Activated naive CD4-positive, alpha-beta T cell treated with anti-CD3 and anti-CD28 coated beads, Interleukin-2, amount 10 ng/mL, durations not matched to agents 7 days and 5 days (primary cell): ENCODE measurements at regions of chr1 and their contacts with region 1.

Region 1: GRCh38 chr1:17606826-17607440 is 67.4 kb downstream of the ARHGEF10L start:
- DNase-seq: peak; percentile 69
- H3K4me3 Mint-ChIP-seq: no peak overlapping the region
- H3K27ac Mint-ChIP-seq: no peak overlapping the region
- H3K4me1 Mint-ChIP-seq: no peaks in the 10 kb centered on the region
- H3K27me3 Mint-ChIP-seq: peaks cover 8% of the 10 kb centered on the region

Region 2: DNA sequence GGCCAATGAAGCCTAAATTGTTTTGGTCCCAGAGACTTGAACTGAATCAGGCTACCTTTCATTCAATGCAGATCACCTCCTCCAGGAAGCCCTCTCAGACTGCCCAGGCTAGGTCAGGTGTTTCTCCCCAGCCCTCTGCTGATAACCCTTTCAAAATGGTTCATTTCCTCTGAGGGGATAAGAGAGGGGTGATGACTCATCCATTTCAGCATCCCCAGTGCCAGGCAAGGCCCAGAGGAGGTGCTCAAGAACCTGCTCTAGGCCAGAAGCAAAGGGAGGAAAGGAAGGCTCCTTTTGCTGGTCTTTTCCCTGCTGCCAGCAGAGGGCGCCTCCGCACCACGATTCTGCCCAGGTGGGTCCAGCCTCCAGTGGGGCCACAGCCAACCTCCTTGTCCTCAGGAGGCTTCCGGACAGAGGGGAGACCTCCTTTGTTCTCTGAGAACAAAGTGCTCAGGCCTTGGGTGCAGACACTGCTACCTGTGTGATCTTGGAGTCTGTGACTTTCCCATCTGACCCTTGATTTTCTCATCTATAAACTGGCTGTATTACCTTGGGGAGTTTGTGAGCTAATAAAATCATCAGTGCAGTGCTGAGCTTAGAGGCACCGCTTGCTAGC is 112.7 kb before region 1 on chr1:
- CTCF ChIA-PET with region 1: interaction called, 13 read pairs
- DNase-seq: peak; percentile 76
- H3K4me3 Mint-ChIP-seq: no peak overlapping the region
- H3K27ac Mint-ChIP-seq: no peak overlapping the region
- H3K4me1 Mint-ChIP-seq: no peaks in the 10 kb centered on the region
- H3K27me3 Mint-ChIP-seq: peaks cover 28% of the 10 kb centered on the region

Region 3: GRCh38 chr1:17502326-17502778 is 104.6 kb before region 1 on chr1:
- CTCF ChIA-PET with region 1: interaction called, 68 read pairs
- DNase-seq: peak; percentile 78
- H3K4me3 Mint-ChIP-seq: no peak overlapping the region
- H3K27ac Mint-ChIP-seq: no peak overlapping the region
- H3K4me1 Mint-ChIP-seq: no peaks in the 10 kb centered on the region
- H3K27me3 Mint-ChIP-seq: peaks cover 19% of the 10 kb centered on the region

Region 4: GRCh38 chr1:17507916-17508315 is 99.0 kb before region 1 on chr1:
- CTCF ChIA-PET with region 1: interaction called, 68 read pairs
- DNase-seq: no peak
- H3K4me3 Mint-ChIP-seq: no peak overlapping the region
- H3K27ac Mint-ChIP-seq: no peak overlapping the region
- H3K4me1 Mint-ChIP-seq: no peaks in the 10 kb centered on the region
- H3K27me3 Mint-ChIP-seq: peaks cover 10% of the 10 kb centered on the region